ENCODE measurements at regions of chr3 and their contacts with region 1.

Region 1: GRCh38 chr3:28667646-28668621 is 319.3 kb upstream of the AZI2 start:
- DNase-seq: peak; percentile 79
- H3K4me3 ChIP-seq: no peak overlapping the region
- H3K27ac ChIP-seq: no peak overlapping the region
- H3K4me1 ChIP-seq: no peaks in the 10 kb centered on the region
- H3K27me3 ChIP-seq: peaks cover 0 to 4% of the 10 kb centered on the region in 2 experiments
- CTCF ChIP-seq: peak; percentile 79 to 87
- POLR2A ChIP-seq: no peak

Region 2: GRCh38 chr3:28682121-28682520 is 14.2 kb after region 1 on chr3:
- CTCF ChIA-PET with region 1: interaction called, 10 read pairs
- POLR2A ChIA-PET with region 1: interaction called, 3 read pairs
- dilution Hi-C with region 1: no loop called
- intact Hi-C with region 1: no loop called
- DNase-seq: no peak
- H3K4me3 ChIP-seq: no peak overlapping the region
- H3K27ac ChIP-seq: no peak overlapping the region
- H3K4me1 ChIP-seq: no peaks in the 10 kb centered on the region
- H3K27me3 ChIP-seq: peaks cover 0 to 3% of the 10 kb centered on the region in 2 experiments
- CTCF ChIP-seq: no peak
- POLR2A ChIP-seq: no peak

Region 3: GRCh38 chr3:28699283-28699682 is 31.3 kb after region 1 on chr3:
- CTCF ChIA-PET with region 1: interaction called, 18 read pairs
- POLR2A ChIA-PET with region 1: no interaction called
- dilution Hi-C with region 1: no loop called
- intact Hi-C with region 1: no loop called
- DNase-seq: no peak
- H3K4me3 ChIP-seq: no peak overlapping the region
- H3K27ac ChIP-seq: no peak overlapping the region
- H3K4me1 ChIP-seq: no peaks in the 10 kb centered on the region
- H3K27me3 ChIP-seq: no peaks in the 10 kb centered on the region
- CTCF ChIP-seq: no peak
- POLR2A ChIP-seq: no peak

Region 4: GRCh38 chr3:28726840-28727239 is 58.9 kb after region 1 on chr3:
- CTCF ChIA-PET with region 1: interaction called, 131 read pairs
- POLR2A ChIA-PET with region 1: no interaction called
- dilution Hi-C with region 1: no loop called
- intact Hi-C with region 1: loop called (anchors 1 kb)
- DNase-seq: peak; percentile 59
- H3K4me3 ChIP-seq: no peak overlapping the region
- H3K27ac ChIP-seq: no peak overlapping the region
- H3K4me1 ChIP-seq: no peaks in the 10 kb centered on the region
- H3K27me3 ChIP-seq: no peaks in the 10 kb centered on the region
- CTCF ChIP-seq: peak; percentile 61 to 75
- POLR2A ChIP-seq: no peak

Region 5: GRCh38 chr3:29764603-29765254 is 1096.8 kb after region 1 on chr3:
- CTCF ChIA-PET with region 1: interaction called, 21 read pairs
- POLR2A ChIA-PET with region 1: no interaction called
- dilution Hi-C with region 1: no loop called
- intact Hi-C with region 1: no loop called
- DNase-seq: peak; percentile 83
- H3K4me3 ChIP-seq: no peak overlapping the region
- H3K27ac ChIP-seq: no peak overlapping the region
- H3K4me1 ChIP-seq: peaks cover 14% of the 10 kb centered on the region
- H3K27me3 ChIP-seq: no peaks in the 10 kb centered on the region
- CTCF ChIP-seq: peak; percentile 36 to 47
- POLR2A ChIP-seq: no peak

Measured in endothelial cell of umbilical vein (primary cell).